A673 (cell line): ENCODE measurements at regions of chr16 and their contacts with region 1.

Region 1: GRCh38 chr16:83253521-83253920 is 554.3 kb upstream of the HSBP1 start:
- DNase-seq: no peak
- H3K4me3 ChIP-seq: no peak overlapping the region
- H3K27ac ChIP-seq: no peak overlapping the region
- H3K4me1 ChIP-seq: no peaks in the 10 kb centered on the region
- H3K27me3 ChIP-seq: peaks cover 4% of the 10 kb centered on the region
- CTCF ChIP-seq: no peak

Region 2: DNA sequence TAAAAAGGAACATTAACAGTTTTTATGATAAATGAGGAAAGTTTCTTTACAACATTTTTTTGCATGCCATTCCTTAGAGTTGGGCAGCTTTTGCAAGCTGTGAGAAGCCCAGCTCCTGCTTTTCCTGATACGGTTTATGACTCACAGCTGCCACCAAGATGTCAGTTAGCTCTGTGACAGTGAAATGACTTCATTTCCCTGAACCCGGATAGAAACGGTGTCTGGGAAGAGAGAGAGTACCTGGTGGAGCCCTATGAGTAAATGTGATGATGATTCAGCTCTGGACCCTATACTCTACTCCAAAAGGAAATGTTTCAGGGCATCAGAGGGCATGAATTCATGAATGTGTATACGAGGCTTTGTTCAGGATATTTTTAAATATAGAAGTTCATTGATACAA is 188.0 kb after region 1 on chr16:
- CTCF ChIA-PET with region 1: interaction called, 12 read pairs
- POLR2A ChIA-PET with region 1: no interaction called
- intact Hi-C with region 1: no loop called
- DNase-seq: no peak
- H3K4me3 ChIP-seq: no peak overlapping the region
- H3K27ac ChIP-seq: no peak overlapping the region
- H3K4me1 ChIP-seq: no peaks in the 10 kb centered on the region
- H3K27me3 ChIP-seq: peaks cover 15% of the 10 kb centered on the region
- CTCF ChIP-seq: no peak